ENCODE measurements at regions of chr6 and their contacts with region 1.

Region 1: DNA sequence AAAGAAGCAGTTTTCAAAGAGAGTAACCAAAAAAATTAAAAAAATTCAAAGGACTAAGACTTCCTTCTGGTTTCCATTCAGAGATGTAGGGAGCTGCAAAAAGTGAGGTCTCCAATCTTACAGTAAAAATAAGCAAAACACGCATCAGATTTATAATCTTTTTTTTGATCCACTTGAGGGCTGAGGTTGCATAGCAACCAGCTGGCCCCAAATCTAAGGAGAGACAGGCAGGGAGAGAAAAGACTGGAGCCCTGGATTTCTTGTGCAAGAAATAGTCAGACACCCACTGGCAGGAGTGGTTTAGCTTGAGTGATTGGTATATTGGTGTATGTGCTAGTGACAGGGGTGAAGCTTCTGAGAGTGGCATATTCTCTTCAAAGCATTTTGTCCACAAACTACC is 135.9 kb upstream of the FUT9 start:
- DNase-seq: no peak
- ATAC-seq: no peak

Region 2: DNA sequence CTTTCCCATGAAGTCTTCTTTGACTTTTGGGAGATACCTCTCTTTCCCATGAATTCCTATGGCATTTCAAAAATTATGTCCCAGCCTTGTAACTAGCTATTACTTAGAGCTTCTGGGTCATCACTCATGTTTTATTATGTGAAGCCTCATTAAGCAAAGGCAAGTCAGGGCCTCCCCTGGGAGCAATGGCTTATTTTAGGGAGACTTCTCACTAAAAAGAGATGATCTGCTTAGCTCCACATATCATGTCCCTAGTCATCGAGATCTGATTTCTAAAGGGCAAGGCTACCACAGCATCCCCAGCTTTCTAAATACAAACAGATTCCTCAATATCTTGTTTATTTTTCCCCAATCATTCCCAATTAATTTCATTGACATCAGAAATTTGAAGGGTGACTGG is 456.5 kb before region 1 on chr6:
- intact Hi-C with region 1: loop called in 1 of 2 experiments (anchors 10 kb)
- DNase-seq: no peak
- ATAC-seq: no peak

Region 3: DNA sequence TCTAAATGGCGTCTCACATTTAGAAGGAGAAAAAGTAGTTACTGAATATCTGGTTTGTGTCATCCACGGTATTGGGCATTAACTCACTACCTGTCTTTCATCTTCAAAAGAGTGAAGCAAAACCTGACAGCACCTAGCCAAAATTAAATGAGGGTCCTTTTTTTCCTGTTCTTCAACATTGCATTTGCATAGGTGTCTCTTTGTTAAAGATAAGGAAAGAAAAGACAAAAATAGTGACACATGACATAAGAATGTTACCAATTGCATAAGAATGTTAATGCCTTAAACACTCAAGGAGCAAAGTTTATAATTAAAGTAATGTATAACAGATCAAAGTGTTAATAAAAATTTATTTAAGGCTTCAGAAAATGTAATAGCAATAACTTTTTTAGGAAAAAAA is 363.9 kb before region 1 on chr6:
- intact Hi-C with region 1: no loop called
- DNase-seq: no peak
- ATAC-seq: no peak